Activated CD4-positive, alpha-beta T cell treated with anti-CD3 and anti-CD28 coated beads for 36 hours (primary cell): ENCODE measurements at regions of chr9 and their contacts with region 1.

Region 1: DNA sequence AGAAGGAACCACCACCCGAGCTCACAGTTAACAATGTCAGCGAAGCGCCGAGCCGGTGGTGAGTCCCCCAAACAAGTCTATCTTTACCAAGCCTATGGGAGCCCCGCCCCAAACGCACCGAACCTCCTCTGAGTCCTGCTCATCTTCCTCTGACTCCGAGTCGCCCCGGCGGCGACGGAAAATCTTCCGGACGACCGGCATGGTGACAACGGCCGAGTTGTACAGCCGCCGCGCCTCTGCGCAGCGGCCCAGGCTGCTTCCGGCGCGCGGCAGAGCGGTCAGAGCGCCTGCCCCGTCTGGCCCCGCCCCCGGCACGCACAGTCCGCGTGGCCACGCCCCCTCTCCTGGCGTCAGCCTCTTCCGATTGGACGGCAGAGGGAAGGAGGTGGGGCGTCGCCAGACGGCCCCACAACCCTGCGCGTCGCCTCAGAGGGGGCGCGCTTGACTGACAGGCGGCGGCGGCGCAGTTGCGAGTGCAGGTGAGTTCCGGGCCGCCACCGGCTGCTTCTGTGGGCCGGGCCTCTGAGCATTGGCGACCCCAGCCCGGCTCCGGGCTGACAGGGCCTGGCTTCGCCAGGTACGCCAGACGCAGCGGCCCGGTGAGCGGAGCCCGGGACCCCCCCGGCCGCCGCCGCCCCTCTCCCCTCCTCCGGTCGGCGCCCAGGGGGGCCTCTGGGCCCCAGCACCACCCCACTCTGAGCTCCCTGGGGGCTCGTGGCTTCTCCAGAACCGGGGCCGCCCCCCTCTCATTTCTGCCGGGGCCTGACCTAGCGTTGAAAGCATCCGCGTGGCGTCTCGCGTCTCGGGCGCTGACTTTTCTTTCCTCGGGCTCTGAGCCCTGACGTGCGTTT is at the starts of genes C9orf78 and USP20:
- DNase-seq: peak; percentile 99
- ATAC-seq: peak; percentile 87
- H3K4me3 Mint-ChIP-seq: peak within 1 kb of the TSS; percentile 96
- H3K27ac Mint-ChIP-seq: peak within 1 kb of the TSS; percentile 96
- H3K4me1 Mint-ChIP-seq: peaks cover 55% of the 10 kb centered on the region
- H3K27me3 Mint-ChIP-seq: no peaks in the 10 kb centered on the region
- total RNA-seq, gene C9orf78: 42.8 to 59.8 TPM
- total RNA-seq, gene USP20: 37.6 to 48.5 TPM

Region 2: DNA sequence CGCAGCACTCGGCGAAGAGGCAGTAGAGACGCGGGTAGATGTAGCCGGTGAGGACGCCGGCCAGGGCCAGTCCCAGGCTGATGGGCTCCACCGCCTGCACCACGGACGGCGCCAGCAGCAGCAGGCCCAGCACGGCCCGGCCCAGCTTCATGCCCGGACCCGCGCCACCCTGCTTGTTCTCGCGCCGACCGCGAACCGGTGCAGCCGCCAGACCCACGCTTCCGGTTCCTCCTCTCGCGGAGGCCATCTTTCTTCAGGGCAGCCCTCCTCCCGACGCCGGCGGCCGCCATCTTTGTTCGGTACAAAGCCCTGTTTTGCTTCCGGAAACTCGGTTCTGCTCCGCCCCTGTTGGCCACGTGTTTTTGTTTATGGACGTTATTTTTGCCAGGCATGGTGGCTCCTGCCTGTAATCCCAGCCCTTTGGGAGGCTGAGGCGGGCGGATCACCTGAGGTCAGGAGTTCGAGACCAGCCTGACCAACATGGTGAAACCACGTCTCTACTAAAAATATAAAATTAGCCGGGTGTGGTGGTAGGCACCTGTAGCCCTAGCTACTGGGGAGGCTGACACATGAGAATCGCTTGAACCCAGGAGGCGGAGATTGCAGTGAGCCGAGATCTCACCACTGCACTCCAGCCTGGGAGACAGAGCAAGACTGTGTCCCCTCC is 11.2 kb before region 1 on chr9 and contains the start of gene TOR1A:
- CTCF ChIA-PET with region 1: interaction called, 3 read pairs
- POLR2A ChIA-PET with region 1: interaction called, 3 read pairs
- intact Hi-C with region 1: loop called (anchors 1 kb)
- DNase-seq: peak; percentile 97
- ATAC-seq: peak; percentile 93
- H3K4me3 Mint-ChIP-seq: peak within 1 kb of the TSS; percentile 82
- H3K27ac Mint-ChIP-seq: peak within 1 kb of the TSS; percentile 63
- H3K4me1 Mint-ChIP-seq: peaks cover 14% of the 10 kb centered on the region
- H3K27me3 Mint-ChIP-seq: no peaks in the 10 kb centered on the region
- total RNA-seq, gene TOR1A: 34.9 to 39.7 TPM

Region 3: GRCh38 chr9:129863059-129863690 is 27.9 kb after region 1 on chr9:
- CTCF ChIA-PET with region 1: interaction called, 3 read pairs
- POLR2A ChIA-PET with region 1: interaction called, 4 read pairs
- intact Hi-C with region 1: loop called in 1 of 2 experiments (anchors 1 kb)
- DNase-seq: peak; percentile 83
- ATAC-seq: peak; percentile 70
- H3K4me3 Mint-ChIP-seq: peak overlapping the region; percentile 32
- H3K27ac Mint-ChIP-seq: peak overlapping the region; percentile 87
- H3K4me1 Mint-ChIP-seq: peaks cover 75% of the 10 kb centered on the region
- H3K27me3 Mint-ChIP-seq: no peaks in the 10 kb centered on the region

Region 4: GRCh38 chr9:130042833-130043653 is 207.8 kb after region 1 on chr9 and contains the start of gene FNBP1:
- CTCF ChIA-PET with region 1: no interaction called
- POLR2A ChIA-PET with region 1: no interaction called
- intact Hi-C with region 1: loop called in 1 of 2 experiments (anchors 5 kb)
- DNase-seq: peak; percentile 91
- ATAC-seq: peak; percentile 63
- H3K4me3 Mint-ChIP-seq: peak within 1 kb of the TSS; percentile 100
- H3K27ac Mint-ChIP-seq: peak within 1 kb of the TSS; percentile 100
- H3K4me1 Mint-ChIP-seq: peaks cover 33% of the 10 kb centered on the region
- H3K27me3 Mint-ChIP-seq: no peaks in the 10 kb centered on the region
- total RNA-seq, gene FNBP1: 254 to 354 TPM

Region 5: GRCh38 chr9:130343445-130343918 is 508.2 kb after region 1 on chr9:
- CTCF ChIA-PET with region 1: no interaction called
- POLR2A ChIA-PET with region 1: no interaction called
- intact Hi-C with region 1: loop called in 1 of 2 experiments (anchors 10 kb)
- DNase-seq: peak; percentile 66
- ATAC-seq: peak; percentile 40
- H3K4me3 Mint-ChIP-seq: no peak overlapping the region
- H3K27ac Mint-ChIP-seq: no peak overlapping the region
- H3K4me1 Mint-ChIP-seq: no peaks in the 10 kb centered on the region
- H3K27me3 Mint-ChIP-seq: no peaks in the 10 kb centered on the region